ENCODE measurements at regions of chr18 and their contacts with region 1.

Region 1: GRCh38 chr18:58615140-58616132 is 13.5 kb downstream of the ALPK2 start:
- DNase-seq: peak; percentile 64 to 80 (median 77)
- H3K4me3 ChIP-seq: peak overlapping the region in 1 of 2 donors; percentile 12
- H3K4me3 Mint-ChIP-seq: peak overlapping the region; percentile 55 to 89 (median 82)
- H3K27ac ChIP-seq: peak overlapping the region; percentile 63
- H3K27ac Mint-ChIP-seq: peak overlapping the region; percentile 96 to 99 (median 99)
- H3K4me1 ChIP-seq: peaks cover 39% of the 10 kb centered on the region
- H3K4me1 Mint-ChIP-seq: peaks cover 33 to 57% (median 45%) of the 10 kb centered on the region in 4 donors
- H3K27me3 ChIP-seq: no peaks in the 10 kb centered on the region
- H3K27me3 Mint-ChIP-seq: no peaks in the 10 kb centered on the region

Region 2: DNA sequence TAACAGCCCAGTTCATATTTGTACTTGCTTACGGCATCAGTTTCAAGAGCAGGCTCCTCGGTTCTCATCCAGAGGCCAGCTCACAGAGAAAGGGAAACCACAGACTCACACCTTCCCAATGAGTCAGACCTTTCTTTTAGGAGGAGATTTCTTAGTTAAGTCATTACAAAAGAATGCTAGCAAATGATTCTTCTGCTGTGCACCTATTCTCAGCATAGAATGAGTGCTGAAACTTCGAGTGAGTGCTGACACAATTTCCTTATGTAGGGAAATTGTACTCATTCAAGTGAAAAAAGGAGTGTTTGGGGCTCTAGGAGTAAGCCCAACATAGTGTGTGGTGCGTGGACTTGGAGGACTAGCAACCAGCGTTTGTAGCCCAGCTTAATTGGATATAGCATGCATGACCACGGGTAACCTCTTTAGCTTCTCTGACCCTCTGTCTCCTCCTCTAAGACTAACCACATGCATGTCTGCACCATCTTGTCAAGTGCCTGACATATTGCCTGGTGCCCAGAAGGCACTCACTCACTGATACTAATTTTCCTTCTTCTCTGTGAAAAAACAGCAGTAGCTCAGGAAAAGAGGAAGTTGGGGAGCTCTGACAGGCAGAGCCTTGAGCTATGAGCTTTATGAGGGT is 73.5 kb before region 1 on chr18:
- CTCF ChIA-PET with region 1: interaction called, 3 read pairs
- POLR2A ChIA-PET with region 1: no interaction called
- intact Hi-C with region 1: loop called (anchors 5 kb)
- DNase-seq: peak; percentile 17 to 77 (median 37)
- H3K4me3 ChIP-seq: no peak overlapping the region
- H3K4me3 Mint-ChIP-seq: peak overlapping the region in 5 of 8 donors; percentile 38 to 65 (median 52)
- H3K27ac ChIP-seq: no peak overlapping the region
- H3K27ac Mint-ChIP-seq: peak overlapping the region in 6 of 7 donors; percentile 1 to 90 (median 70)
- H3K4me1 ChIP-seq: peaks cover 21% of the 10 kb centered on the region
- H3K4me1 Mint-ChIP-seq: peaks cover 21 to 31% (median 23%) of the 10 kb centered on the region in 4 donors
- H3K27me3 ChIP-seq: no peaks in the 10 kb centered on the region
- H3K27me3 Mint-ChIP-seq: no peaks in the 10 kb centered on the region

Region 3: GRCh38 chr18:58605027-58606020 is 10.1 kb before region 1 on chr18:
- CTCF ChIA-PET with region 1: interaction called, 4 read pairs
- POLR2A ChIA-PET with region 1: interaction called, 5 read pairs
- intact Hi-C with region 1: loop called (anchors 1 kb)
- DNase-seq: peak; percentile 31 to 70 (median 52)
- H3K4me3 ChIP-seq: no peak overlapping the region
- H3K4me3 Mint-ChIP-seq: peak overlapping the region in 7 of 8 donors; percentile 9 to 74 (median 57)
- H3K27ac ChIP-seq: no peak overlapping the region
- H3K27ac Mint-ChIP-seq: peak overlapping the region; percentile 39 to 88 (median 64)
- H3K4me1 ChIP-seq: peaks cover 51% of the 10 kb centered on the region
- H3K4me1 Mint-ChIP-seq: peaks cover 26 to 62% (median 44%) of the 10 kb centered on the region in 4 donors
- H3K27me3 ChIP-seq: no peaks in the 10 kb centered on the region
- H3K27me3 Mint-ChIP-seq: no peaks in the 10 kb centered on the region

Region 4: DNA sequence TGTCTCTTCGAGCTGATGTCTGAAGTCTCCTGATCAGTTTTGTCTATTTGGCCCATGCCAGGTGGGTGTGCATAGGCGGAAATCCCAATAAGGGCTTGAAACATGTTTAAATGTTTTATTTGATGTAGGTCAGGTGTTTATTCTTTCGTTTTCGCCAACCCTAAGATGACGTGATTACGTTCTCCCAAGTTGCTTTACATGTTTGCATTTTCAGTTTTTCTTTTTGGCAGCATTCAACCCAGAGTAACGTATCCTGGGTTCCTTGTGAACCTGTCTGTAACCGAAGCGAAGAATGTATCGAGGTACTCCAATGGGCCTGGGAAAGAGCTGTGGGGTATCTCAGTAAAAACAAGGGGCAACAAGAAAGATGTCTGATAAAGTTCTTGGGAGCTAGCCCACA is 10.4 kb after region 1 on chr18:
- CTCF ChIA-PET with region 1: interaction called, 4 read pairs
- POLR2A ChIA-PET with region 1: interaction called, 11 read pairs
- intact Hi-C with region 1: no loop called
- DNase-seq: peak in 3 of 5 donors; percentile 40 to 46 (median 44)
- H3K4me3 ChIP-seq: no peak overlapping the region
- H3K4me3 Mint-ChIP-seq: peak overlapping the region in 7 of 8 donors; percentile 18 to 71 (median 49)
- H3K27ac ChIP-seq: no peak overlapping the region
- H3K27ac Mint-ChIP-seq: peak overlapping the region in 6 of 7 donors; percentile 52 to 90 (median 84)
- H3K4me1 ChIP-seq: peaks cover 16% of the 10 kb centered on the region
- H3K4me1 Mint-ChIP-seq: peaks cover 10 to 43% (median 22%) of the 10 kb centered on the region in 4 donors
- H3K27me3 ChIP-seq: no peaks in the 10 kb centered on the region
- H3K27me3 Mint-ChIP-seq: no peaks in the 10 kb centered on the region

Region 5: GRCh38 chr18:58661423-58661822 is 46.0 kb after region 1 on chr18:
- CTCF ChIA-PET with region 1: interaction called, 8 read pairs
- POLR2A ChIA-PET with region 1: interaction called, 14 read pairs
- intact Hi-C with region 1: loop called (anchors 5 kb)
- DNase-seq: no peak
- H3K4me3 ChIP-seq: no peak overlapping the region
- H3K4me3 Mint-ChIP-seq: no peak overlapping the region
- H3K27ac ChIP-seq: no peak overlapping the region
- H3K27ac Mint-ChIP-seq: peak overlapping the region in 1 of 7 donors; percentile 6
- H3K4me1 ChIP-seq: peaks cover 46% of the 10 kb centered on the region
- H3K4me1 Mint-ChIP-seq: peaks cover 31 to 56% (median 43%) of the 10 kb centered on the region in 4 donors
- H3K27me3 ChIP-seq: no peaks in the 10 kb centered on the region
- H3K27me3 Mint-ChIP-seq: no peaks in the 10 kb centered on the region

Region 6: DNA sequence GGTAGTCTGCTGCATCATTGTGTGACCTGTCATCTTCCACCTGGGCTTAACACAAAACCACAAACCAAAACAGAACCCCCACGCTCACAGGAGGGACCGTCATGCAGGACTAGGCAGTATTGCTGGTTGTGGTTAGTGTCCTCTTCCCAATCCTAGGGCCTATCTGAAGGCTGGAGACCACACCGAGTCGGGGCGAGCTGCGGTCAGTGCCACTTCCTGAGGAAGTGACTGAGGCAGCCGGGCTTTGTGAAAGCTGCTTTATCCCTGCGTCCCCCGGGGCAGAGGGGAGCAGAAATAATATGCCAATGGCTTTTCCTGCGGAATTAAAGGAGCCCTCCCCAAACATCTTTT is 272.2 kb after region 1 on chr18:
- CTCF ChIA-PET with region 1: no interaction called
- POLR2A ChIA-PET with region 1: no interaction called
- intact Hi-C with region 1: no loop called
- DNase-seq: no peak
- H3K4me3 ChIP-seq: no peak overlapping the region
- H3K4me3 Mint-ChIP-seq: peak overlapping the region in 3 of 8 donors; percentile 12 to 41 (median 24)
- H3K27ac ChIP-seq: no peak overlapping the region
- H3K27ac Mint-ChIP-seq: peak overlapping the region in 1 of 7 donors; percentile 22
- H3K4me1 ChIP-seq: peaks cover 12% of the 10 kb centered on the region
- H3K4me1 Mint-ChIP-seq: peaks cover 9 to 16% (median 12%) of the 10 kb centered on the region in 4 donors
- H3K27me3 ChIP-seq: no peaks in the 10 kb centered on the region
- H3K27me3 Mint-ChIP-seq: peaks cover 0 to 14% of the 10 kb centered on the region in 2 donors

Region 7: DNA sequence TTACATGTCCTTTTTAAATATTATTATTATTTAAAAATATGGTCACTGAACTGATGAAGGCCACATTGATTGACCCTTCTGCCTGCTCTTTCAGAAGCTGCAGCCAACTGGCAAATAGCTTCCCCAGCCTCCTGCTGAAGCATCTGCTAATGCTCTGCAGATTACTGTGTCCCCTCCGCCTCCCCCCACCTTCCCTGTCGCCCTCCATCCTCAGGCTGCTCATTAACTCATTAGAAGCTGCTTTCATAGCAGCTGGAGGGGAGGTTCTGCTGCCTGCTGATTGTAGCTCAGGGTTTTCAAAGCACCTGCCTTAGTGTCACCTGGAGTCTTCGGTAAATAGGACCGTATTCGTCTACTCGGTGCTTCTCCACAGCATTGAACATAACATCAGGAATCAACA is 768.4 kb after region 1 on chr18:
- CTCF ChIA-PET with region 1: no interaction called
- POLR2A ChIA-PET with region 1: no interaction called
- intact Hi-C with region 1: no loop called
- DNase-seq: no peak
- H3K4me3 ChIP-seq: no peak overlapping the region
- H3K4me3 Mint-ChIP-seq: no peak overlapping the region
- H3K27ac ChIP-seq: no peak overlapping the region
- H3K27ac Mint-ChIP-seq: no peak overlapping the region
- H3K4me1 ChIP-seq: no peaks in the 10 kb centered on the region
- H3K4me1 Mint-ChIP-seq: no peaks in the 10 kb centered on the region
- H3K27me3 ChIP-seq: no peaks in the 10 kb centered on the region
- H3K27me3 Mint-ChIP-seq: peaks cover 12 to 16% of the 10 kb centered on the region in 2 donors